HepG2 (cell line): ENCODE measurements at regions of chr6 and their contacts with region 1.

Region 1: DNA sequence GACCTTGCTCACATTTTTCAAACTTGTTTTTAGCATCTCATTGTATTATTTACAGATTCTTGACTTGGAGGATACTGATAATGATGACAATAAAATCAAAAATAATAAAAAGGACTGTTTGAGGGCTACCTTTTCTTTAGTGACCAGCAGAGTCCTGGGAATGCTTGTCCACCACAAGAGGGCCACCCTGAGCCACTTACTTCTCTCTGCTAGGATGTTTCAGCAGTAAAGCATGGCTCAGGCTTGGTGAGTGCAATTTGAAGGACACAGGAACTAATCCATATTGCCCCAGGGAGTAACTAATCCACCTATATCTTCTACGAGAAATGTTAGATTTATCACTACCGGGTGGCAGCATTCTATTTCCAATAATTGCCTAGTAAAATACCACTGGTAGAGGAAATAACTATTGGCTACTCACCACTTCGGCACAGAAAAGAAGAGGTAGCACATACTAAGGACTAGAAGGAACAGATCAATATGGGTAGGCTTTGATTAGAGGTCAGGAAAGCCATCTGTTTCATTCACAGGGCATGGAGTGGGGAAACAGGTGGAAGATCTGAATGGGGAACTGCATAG is 5.8 kb upstream of the KIAA0408 start:
- DNase-seq: peak; percentile 54
- ATAC-seq: peak; percentile 99
- H3K4me3 ChIP-seq: no peak overlapping the region
- H3K27ac ChIP-seq: no peak overlapping the region
- H3K4me1 ChIP-seq: no peaks in the 10 kb centered on the region
- H3K27me3 ChIP-seq: no peaks in the 10 kb centered on the region; a peak in 1 of 5 replicates
- CTCF ChIP-seq: peak; percentile 84
- EP300 ChIP-seq: no peak
- POLR2A ChIP-seq: no peak
- RAD21 ChIP-seq: peak; percentile 63; the same call in 1 of the 2 replicates

Region 2: DNA sequence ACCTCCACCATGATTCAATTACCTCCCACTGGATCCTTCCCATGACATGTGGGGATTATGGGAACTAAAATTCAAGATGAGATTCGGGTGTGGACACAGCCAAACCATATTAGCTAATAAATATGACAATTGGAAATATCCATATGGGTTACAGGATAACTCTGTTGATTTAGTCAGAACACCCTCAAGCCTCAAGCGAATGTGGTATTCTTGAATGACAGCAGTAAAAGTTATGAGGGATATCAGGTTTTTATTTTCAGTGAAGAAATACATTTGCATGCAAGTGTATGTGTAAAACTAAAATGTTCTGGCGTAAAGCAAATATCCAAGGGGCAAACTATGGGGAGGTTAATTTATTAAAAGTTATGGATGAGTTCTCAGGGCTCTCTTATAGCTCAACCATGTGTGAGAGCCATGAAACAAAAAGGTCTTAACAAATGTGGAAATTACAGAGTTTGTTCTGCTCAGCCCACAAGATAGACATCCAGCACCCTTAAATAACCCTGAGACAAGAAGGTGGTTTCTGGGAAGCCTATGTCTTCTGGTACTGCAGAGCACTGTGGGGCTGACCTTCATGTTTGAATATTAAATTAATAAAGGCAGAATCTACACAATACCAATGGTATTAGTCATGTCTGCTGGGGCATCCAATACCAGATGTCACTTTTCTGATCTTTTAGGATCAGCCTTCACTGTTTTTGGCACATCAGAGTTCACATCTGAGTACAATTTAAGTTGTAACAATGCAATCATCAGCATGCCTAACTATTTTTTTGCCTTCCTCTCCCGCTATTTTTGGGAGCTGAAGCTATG is 717.0 kb before region 1 on chr6:
- CTCF ChIA-PET with region 1: no interaction called
- POLR2A ChIA-PET with region 1: no interaction called
- in situ Hi-C with region 1: no loop called
- intact Hi-C with region 1: no loop called
- DNase-seq: no peak
- ATAC-seq: no peak
- H3K4me3 ChIP-seq: no peak overlapping the region
- H3K27ac ChIP-seq: no peak overlapping the region
- H3K4me1 ChIP-seq: no peaks in the 10 kb centered on the region
- H3K27me3 ChIP-seq: no peaks in the 10 kb centered on the region
- CTCF ChIP-seq: no peak
- EP300 ChIP-seq: no peak
- POLR2A ChIP-seq: no peak
- RAD21 ChIP-seq: no peak

Region 3: GRCh38 chr6:127539272-127539671 is 74.3 kb after region 1 on chr6:
- CTCF ChIA-PET with region 1: interaction called, 17 read pairs
- POLR2A ChIA-PET with region 1: no interaction called
- in situ Hi-C with region 1: loop called (anchors 5 kb)
- intact Hi-C with region 1: loop called (anchors 1 kb)
- DNase-seq: no peak
- ATAC-seq: no peak
- H3K4me3 ChIP-seq: no peak overlapping the region
- H3K27ac ChIP-seq: no peak overlapping the region
- H3K4me1 ChIP-seq: no peaks in the 10 kb centered on the region
- H3K27me3 ChIP-seq: 0 out of 5 replicates have a peak, but pooled peaks cover 1 to 3% of the 10 kb centered on the region in 2 experiments
- CTCF ChIP-seq: no peak
- EP300 ChIP-seq: no peak
- POLR2A ChIP-seq: no peak
- RAD21 ChIP-seq: no peak

Region 4: DNA sequence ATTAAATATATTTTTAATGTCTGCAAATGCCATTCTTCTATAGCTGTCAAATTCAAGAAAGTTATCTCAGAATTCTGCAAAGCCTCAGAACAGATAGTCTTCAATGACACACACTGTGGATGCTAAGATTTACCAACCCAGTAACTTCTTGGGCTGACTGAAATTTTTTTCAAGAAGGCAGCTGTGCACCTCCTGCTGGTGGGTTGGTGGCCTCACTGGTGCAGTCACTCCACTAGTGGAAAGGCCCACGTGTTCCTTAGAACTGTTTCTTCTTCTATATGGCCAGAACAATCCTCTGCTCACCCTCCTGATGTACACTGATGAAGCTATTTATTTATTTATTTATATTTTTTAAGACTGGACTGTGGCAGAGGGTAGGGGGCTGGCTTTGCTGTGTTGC is 82.2 kb after region 1 on chr6:
- CTCF ChIA-PET with region 1: interaction called, 6 read pairs
- POLR2A ChIA-PET with region 1: no interaction called
- in situ Hi-C with region 1: loop called (anchors 5 kb)
- intact Hi-C with region 1: loop called (anchors 1 kb)
- DNase-seq: no peak
- ATAC-seq: peak; percentile 69
- H3K4me3 ChIP-seq: no peak overlapping the region
- H3K27ac ChIP-seq: no peak overlapping the region
- H3K4me1 ChIP-seq: no peaks in the 10 kb centered on the region
- H3K27me3 ChIP-seq: no peaks in the 10 kb centered on the region
- CTCF ChIP-seq: peak; percentile 39
- EP300 ChIP-seq: no peak
- POLR2A ChIP-seq: no peak
- RAD21 ChIP-seq: no peak

Region 5: DNA sequence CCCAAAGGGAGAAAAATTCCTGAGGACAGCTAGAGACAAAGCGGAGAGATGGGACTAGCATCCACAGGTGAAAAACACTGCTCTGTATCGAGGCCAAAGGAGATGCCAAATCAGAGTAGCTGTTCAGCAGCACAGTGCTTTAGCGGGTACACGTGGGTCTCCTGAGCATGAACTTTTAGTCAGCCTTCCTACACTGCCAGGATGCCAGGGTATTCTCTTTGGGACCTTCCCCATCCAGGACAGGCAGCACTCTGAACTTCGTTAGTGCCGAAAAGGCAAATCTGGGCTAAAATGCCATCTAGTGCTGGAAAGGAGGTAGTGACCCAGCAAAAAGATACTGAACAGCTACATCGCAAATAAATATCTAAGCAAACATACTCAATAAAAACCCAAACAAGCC is 176.9 kb after region 1 on chr6:
- CTCF ChIA-PET with region 1: interaction called, 24 read pairs
- POLR2A ChIA-PET with region 1: no interaction called
- in situ Hi-C with region 1: no loop called
- intact Hi-C with region 1: loop called (anchors 1 kb)
- DNase-seq: peak; percentile 26
- ATAC-seq: peak; percentile 94
- H3K4me3 ChIP-seq: no peak overlapping the region
- H3K27ac ChIP-seq: no peak overlapping the region
- H3K4me1 ChIP-seq: no peaks in the 10 kb centered on the region
- H3K27me3 ChIP-seq: no peaks in the 10 kb centered on the region
- CTCF ChIP-seq: peak; percentile 81
- EP300 ChIP-seq: no peak
- POLR2A ChIP-seq: no peak
- RAD21 ChIP-seq: 0 out of 2 replicates have a peak, but pooled peaks have one; percentile 21

Region 6: DNA sequence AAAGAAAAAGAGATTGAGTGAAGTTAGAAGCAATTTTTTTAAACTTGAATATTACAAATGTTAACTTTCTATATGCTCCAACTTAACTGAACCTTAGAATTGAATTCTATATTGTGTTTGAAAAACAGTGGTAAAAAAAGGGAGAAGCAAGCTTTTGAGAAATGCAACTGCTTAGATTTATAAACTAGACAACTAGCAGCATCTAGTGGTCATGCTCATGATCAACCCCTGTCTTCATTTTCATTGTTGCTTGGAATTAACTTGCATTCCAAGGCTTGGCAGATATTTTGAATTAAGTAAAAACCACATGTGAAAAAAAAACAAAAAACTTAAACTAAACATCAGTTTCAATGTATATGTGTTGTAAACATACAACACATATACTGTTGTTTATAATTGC is 225.1 kb after region 1 on chr6:
- CTCF ChIA-PET with region 1: interaction called, 8 read pairs
- POLR2A ChIA-PET with region 1: no interaction called
- in situ Hi-C with region 1: no loop called
- intact Hi-C with region 1: loop called (anchors 1 kb)
- DNase-seq: no peak
- ATAC-seq: no peak
- H3K4me3 ChIP-seq: no peak overlapping the region
- H3K27ac ChIP-seq: no peak overlapping the region
- H3K4me1 ChIP-seq: no peaks in the 10 kb centered on the region
- H3K27me3 ChIP-seq: no peaks in the 10 kb centered on the region
- CTCF ChIP-seq: peak; percentile 50
- EP300 ChIP-seq: no peak
- POLR2A ChIP-seq: no peak
- RAD21 ChIP-seq: no peak

Region 7: DNA sequence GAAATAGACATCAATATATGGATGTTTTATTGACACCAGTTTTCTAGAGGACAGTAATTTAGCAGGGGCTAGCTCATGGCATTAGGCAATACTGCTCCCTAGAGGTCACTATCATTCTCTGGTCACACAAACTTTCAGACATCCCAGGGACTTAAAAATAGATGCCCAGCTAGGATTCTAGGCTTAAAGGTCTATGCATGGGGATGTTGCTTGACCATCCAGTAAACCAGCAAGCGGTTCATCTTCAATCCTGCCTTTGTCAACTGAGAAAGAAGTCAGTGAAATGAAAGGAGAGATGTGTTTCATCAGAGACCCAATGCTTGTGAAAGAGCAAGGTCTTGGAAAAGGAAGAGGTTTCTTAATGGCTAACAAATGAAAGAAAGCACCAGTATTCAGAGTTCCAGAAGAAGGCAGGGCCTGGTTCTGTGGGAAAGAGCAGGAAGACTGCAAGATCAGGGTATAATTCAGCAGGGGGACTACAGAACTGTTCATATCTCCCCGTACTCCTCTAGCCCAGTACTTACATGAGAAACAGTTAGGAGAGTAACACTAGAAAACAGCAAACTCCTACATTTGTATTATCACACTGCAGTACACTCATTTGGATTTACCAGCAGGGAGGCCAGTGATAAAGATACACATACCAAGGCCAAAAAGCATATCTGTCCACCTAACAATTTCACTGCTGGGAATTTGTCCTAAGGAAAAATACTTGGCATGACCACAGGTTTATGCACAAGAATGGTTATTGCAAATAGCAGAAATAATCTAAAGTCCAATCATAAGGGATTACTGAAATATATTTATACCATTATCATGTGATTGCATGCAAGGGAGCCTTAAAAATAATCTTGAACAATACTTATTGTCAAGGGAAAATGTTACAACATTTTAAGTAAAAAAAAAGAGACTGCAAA is 1266.5 kb after region 1 on chr6:
- CTCF ChIA-PET with region 1: no interaction called
- POLR2A ChIA-PET with region 1: no interaction called
- in situ Hi-C with region 1: no loop called
- intact Hi-C with region 1: loop called (anchors 10 kb)
- DNase-seq: peak; percentile 56
- ATAC-seq: peak; percentile 90
- H3K4me3 ChIP-seq: no peak overlapping the region
- H3K27ac ChIP-seq: no peak overlapping the region
- H3K4me1 ChIP-seq: no peaks in the 10 kb centered on the region
- H3K27me3 ChIP-seq: no peaks in the 10 kb centered on the region
- CTCF ChIP-seq: peak; percentile 79
- EP300 ChIP-seq: no peak
- POLR2A ChIP-seq: no peak
- RAD21 ChIP-seq: peak; percentile 63